WTC11 (cell line): ENCODE measurements at regions of chr5 and their contacts with region 1.

Region 1: GRCh38 chr5:4295663-4296339 is 700.2 kb downstream of the IRX1 start:
- DNase-seq: peak; percentile 59
- ATAC-seq: peak; percentile 94
- H3K4me3 Mint-ChIP-seq: peak overlapping the region; percentile 11; the same call in 1 of the 2 replicates
- H3K27ac Mint-ChIP-seq: no peak overlapping the region
- H3K4me1 Mint-ChIP-seq: peaks cover 14% of the 10 kb centered on the region
- H3K27me3 Mint-ChIP-seq: no peaks in the 10 kb centered on the region
- CTCF ChIP-seq: peak; percentile 60

Region 2: DNA sequence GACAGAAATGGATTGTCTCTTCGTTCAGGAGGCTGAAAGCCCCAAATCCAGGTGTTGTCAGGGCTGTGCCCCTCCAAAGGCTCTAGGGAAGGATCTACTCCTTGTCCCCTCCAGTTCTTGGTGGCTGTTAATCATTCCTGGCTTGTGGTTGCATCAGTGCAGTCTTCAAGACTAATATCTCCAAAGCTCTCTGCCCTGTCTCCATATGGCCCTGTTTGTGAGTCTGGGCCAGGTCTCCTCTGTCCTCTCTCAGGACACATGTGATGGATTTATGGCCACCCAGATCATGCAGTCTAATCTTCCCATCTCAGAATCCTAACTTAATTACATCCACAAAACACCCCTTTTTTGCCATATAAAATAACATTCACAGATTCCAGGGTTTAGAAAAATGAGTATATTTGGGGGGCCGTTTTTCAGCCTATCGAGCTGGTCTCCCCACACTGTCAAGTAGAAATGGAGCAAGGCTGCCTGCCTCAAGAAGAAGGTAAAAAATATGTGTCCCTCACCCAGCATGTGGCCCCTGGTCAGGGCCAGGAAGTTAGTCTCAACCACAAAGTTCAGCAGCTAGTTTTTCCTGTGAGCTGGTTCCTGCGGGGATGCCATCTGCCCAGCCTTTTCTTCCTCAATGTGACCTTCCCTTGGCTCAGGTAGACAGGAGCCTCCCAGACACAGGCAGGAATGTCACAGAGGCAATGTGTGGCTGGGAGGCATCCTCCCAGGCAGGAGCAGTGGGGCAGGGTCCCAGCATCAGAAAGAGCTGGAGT is 190.8 kb before region 1 on chr5:
- CTCF ChIA-PET with region 1: interaction called, 11 read pairs
- POLR2A ChIA-PET with region 1: no interaction called
- DNase-seq: no peak
- ATAC-seq: no peak
- H3K4me3 Mint-ChIP-seq: no peak overlapping the region
- H3K27ac Mint-ChIP-seq: no peak overlapping the region
- H3K4me1 Mint-ChIP-seq: peaks cover 12% of the 10 kb centered on the region
- H3K27me3 Mint-ChIP-seq: no peaks in the 10 kb centered on the region
- CTCF ChIP-seq: no peak

Region 3: GRCh38 chr5:4142842-4143241 is 153.0 kb before region 1 on chr5:
- CTCF ChIA-PET with region 1: interaction called, 18 read pairs
- POLR2A ChIA-PET with region 1: no interaction called
- DNase-seq: no peak
- ATAC-seq: peak; percentile 90
- H3K4me3 Mint-ChIP-seq: no peak overlapping the region
- H3K27ac Mint-ChIP-seq: no peak overlapping the region
- H3K4me1 Mint-ChIP-seq: peaks cover 17% of the 10 kb centered on the region
- H3K27me3 Mint-ChIP-seq: no peaks in the 10 kb centered on the region
- CTCF ChIP-seq: no peak

Region 4: DNA sequence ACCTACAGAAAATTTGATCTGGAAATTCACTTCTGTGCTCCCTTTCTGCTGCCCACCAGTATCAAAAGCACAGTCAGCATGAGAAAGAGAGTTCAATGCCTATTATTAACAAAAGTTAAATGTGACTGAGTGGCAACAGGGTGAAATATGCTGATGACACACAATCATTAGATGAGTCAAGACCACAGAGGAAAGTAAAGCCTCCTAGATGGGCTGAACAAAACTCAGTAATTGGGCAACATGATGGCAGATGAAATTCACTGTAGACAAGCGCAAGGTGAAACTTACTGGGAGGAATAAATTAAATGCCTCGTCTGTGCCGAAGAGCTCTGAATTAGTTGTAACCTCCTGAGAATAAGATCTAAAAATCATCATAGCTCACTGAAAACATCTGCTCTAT is 52.6 kb after region 1 on chr5:
- CTCF ChIA-PET with region 1: no interaction called
- POLR2A ChIA-PET with region 1: no interaction called
- DNase-seq: no peak
- ATAC-seq: no peak
- H3K4me3 Mint-ChIP-seq: no peak overlapping the region
- H3K27ac Mint-ChIP-seq: no peak overlapping the region
- H3K4me1 Mint-ChIP-seq: peaks cover 2% of the 10 kb centered on the region; the same call in 1 of the 2 replicates
- H3K27me3 Mint-ChIP-seq: no peaks in the 10 kb centered on the region
- CTCF ChIP-seq: no peak

Region 5: DNA sequence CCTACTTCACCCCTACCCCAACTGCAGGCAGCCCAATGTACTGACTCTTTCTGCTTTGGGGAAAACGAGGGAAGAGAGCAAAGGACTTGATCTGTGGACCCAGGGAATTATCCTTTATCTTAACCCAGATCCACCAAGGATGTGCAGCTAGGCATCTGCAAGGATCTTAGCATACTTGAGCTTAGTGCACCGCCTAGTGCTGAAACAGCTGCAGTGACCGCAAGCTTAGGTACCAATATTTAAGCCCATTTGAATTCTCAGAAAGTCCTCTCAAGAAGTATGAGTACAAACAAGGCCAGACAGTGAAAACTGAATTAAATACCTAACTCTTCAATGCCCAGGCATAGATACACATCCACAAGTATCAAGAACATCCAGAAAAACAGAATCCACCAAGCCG is 267.6 kb after region 1 on chr5:
- CTCF ChIA-PET with region 1: interaction called, 19 read pairs
- POLR2A ChIA-PET with region 1: no interaction called
- DNase-seq: peak; percentile 66
- ATAC-seq: peak; percentile 97
- H3K4me3 Mint-ChIP-seq: no peak overlapping the region
- H3K27ac Mint-ChIP-seq: no peak overlapping the region
- H3K4me1 Mint-ChIP-seq: no peaks in the 10 kb centered on the region
- H3K27me3 Mint-ChIP-seq: no peaks in the 10 kb centered on the region; the same call in 1 of the 2 replicates
- CTCF ChIP-seq: peak; percentile 62